Naive thymus-derived CD4-positive, alpha-beta T cell (primary cell): ENCODE measurements at regions of chr15 and their contacts with region 1.

Region 1: GRCh38 chr15:85296615-85297402 is 83.6 kb upstream of the AKAP13 start:
- DNase-seq: peak; percentile 19 to 79 (median 71)
- ATAC-seq: peak; percentile 98
- H3K4me3 ChIP-seq: peak overlapping the region; percentile 20
- H3K4me3 Mint-ChIP-seq: peak overlapping the region; percentile 5 to 78 (median 60)
- H3K27ac ChIP-seq: no peak overlapping the region
- H3K27ac Mint-ChIP-seq: peak overlapping the region in 2 of 9 donors; percentile 12 to 62
- H3K4me1 ChIP-seq: no peaks in the 10 kb centered on the region
- H3K4me1 Mint-ChIP-seq: peaks cover 7 to 22% (median 14%) of the 10 kb centered on the region in 7 donors
- H3K27me3 ChIP-seq: no peaks in the 10 kb centered on the region
- H3K27me3 Mint-ChIP-seq: peaks cover 0 to 1% (median 0%) of the 10 kb centered on the region in 5 donors

Region 2: GRCh38 chr15:85306946-85307708 is 10.3 kb after region 1 on chr15:
- CTCF ChIA-PET with region 1: no interaction called
- POLR2A ChIA-PET with region 1: no interaction called
- intact Hi-C with region 1: no loop called
- DNase-seq: no peak
- ATAC-seq: no peak
- H3K4me3 ChIP-seq: no peak overlapping the region
- H3K4me3 Mint-ChIP-seq: no peak overlapping the region
- H3K27ac ChIP-seq: no peak overlapping the region
- H3K27ac Mint-ChIP-seq: peak overlapping the region in 1 of 9 donors; percentile 26
- H3K4me1 ChIP-seq: peaks cover 0 to 4% of the 10 kb centered on the region in 2 donors
- H3K4me1 Mint-ChIP-seq: peaks cover 6 to 17% (median 8%) of the 10 kb centered on the region in 7 donors
- H3K27me3 ChIP-seq: no peaks in the 10 kb centered on the region
- H3K27me3 Mint-ChIP-seq: peaks cover 0 to 2% (median 0%) of the 10 kb centered on the region in 5 donors

Region 3: GRCh38 chr15:85318048-85318731 is 21.4 kb after region 1 on chr15:
- CTCF ChIA-PET with region 1: interaction called, 6 read pairs
- POLR2A ChIA-PET with region 1: interaction called, 3 read pairs
- intact Hi-C with region 1: loop called (anchors 2 kb)
- DNase-seq: peak in 1 of 9 donors; percentile 29
- ATAC-seq: peak; percentile 61
- H3K4me3 ChIP-seq: no peak overlapping the region
- H3K4me3 Mint-ChIP-seq: peak overlapping the region in 2 of 10 donors; percentile 16 to 74
- H3K27ac ChIP-seq: no peak overlapping the region
- H3K27ac Mint-ChIP-seq: peak overlapping the region in 4 of 9 donors; percentile 22 to 90 (median 27)
- H3K4me1 ChIP-seq: peaks cover 28 to 29% of the 10 kb centered on the region in 2 donors
- H3K4me1 Mint-ChIP-seq: peaks cover 22 to 53% (median 35%) of the 10 kb centered on the region in 7 donors
- H3K27me3 ChIP-seq: no peaks in the 10 kb centered on the region
- H3K27me3 Mint-ChIP-seq: no peaks in the 10 kb centered on the region

Region 4: DNA sequence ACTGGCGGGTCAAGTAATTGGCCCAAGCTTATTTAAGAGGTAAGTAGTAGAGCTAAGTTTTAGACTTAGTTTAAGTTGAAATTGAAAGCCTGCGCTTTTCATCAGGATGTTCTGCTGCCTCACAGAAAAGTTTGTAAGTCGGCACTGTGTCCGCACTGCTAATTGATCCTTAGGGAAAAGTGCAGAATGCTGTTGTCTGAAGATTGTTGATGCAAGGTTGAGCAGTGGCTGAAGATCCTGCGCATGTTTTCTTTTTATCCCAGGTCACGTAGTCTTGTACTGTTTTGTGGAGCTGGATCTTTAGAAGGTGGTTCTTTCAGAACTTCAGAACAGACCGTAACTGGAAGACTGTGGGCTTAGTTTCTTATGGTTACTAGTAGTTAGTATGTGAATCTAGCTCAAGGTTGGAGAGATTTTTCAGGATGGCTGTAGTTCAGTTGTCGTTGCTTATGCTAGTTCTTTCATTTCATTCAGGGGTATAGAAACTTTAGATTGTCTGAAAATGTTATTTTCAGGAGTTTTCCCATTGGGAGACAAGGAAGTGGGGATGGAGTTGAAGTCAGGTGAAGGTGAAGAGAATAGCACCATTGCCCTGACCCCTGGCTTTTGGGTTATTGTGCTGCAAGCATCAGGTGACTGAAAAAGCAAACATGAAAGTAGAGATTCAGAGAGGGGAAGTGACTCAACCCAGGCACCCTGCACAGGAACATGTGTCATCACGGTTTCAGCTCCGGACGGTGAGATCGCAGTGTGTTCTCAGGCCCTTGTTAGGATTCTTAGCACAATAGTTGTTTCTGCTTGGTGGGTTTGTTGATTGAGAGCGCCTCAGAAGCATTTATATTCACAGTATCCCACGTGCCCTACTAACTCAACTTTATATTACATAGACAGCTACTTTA is 116.4 kb after region 1 on chr15:
- CTCF ChIA-PET with region 1: interaction called, 60 read pairs
- POLR2A ChIA-PET with region 1: interaction called, 5 read pairs
- intact Hi-C with region 1: loop called (anchors 1 kb)
- DNase-seq: peak; percentile 21 to 68 (median 43)
- ATAC-seq: peak; percentile 96
- H3K4me3 ChIP-seq: no peak overlapping the region
- H3K4me3 Mint-ChIP-seq: peak overlapping the region; percentile 18 to 81 (median 72)
- H3K27ac ChIP-seq: peak overlapping the region; percentile 47
- H3K27ac Mint-ChIP-seq: peak overlapping the region; percentile 71 to 91 (median 87)
- H3K4me1 ChIP-seq: peaks cover 26 to 29% of the 10 kb centered on the region in 2 donors
- H3K4me1 Mint-ChIP-seq: peaks cover 29 to 76% (median 63%) of the 10 kb centered on the region in 7 donors
- H3K27me3 ChIP-seq: no peaks in the 10 kb centered on the region
- H3K27me3 Mint-ChIP-seq: no peaks in the 10 kb centered on the region

Region 5: DNA sequence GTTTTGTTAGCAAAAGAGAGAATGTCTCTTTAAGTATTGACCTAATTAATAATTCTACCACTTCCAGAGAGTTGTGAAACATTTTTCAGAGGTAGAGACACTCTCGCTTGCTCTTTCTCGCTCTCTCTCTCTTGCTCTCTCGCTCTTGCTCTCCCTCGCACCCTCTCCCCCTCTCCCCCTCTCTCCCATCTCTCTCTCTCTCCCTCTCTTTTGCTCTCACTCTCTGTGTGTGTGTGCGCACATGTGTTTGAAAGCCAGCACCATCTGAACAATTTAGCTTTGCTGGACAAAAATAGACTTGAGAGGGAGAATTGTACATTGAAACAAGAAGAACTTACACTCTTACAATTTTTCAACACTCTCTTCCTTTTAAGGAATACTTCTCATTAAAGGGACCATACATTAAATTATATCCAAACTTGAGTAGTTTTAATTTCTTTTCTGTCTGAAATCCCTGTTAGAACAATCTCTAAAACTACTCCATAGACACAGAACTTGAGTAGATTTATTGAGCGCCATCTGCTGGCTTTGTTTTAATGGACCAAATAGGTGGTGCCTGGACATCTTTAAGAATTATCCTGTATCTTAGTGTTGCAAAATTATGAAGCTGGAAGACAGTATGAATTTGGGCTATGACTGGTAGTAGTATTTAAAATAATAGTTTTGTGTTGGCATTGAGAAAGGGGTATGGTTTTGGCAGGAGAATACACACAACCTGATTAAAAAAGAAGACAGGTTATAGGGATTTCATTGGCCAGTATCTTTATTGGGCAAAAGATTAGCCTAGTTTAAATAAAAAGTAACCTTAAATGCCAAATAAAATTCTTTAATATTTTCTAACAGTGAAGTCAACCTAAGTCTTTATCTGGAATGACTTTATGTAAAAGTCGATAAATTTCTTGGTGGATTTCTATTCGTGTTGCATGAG is 208.2 kb after region 1 on chr15:
- CTCF ChIA-PET with region 1: interaction called, 25 read pairs
- POLR2A ChIA-PET with region 1: interaction called, 4 read pairs
- intact Hi-C with region 1: loop called (anchors 1 kb)
- DNase-seq: peak in 7 of 9 donors; percentile 7 to 51 (median 37)
- ATAC-seq: peak; percentile 66
- H3K4me3 ChIP-seq: no peak overlapping the region
- H3K4me3 Mint-ChIP-seq: peak overlapping the region in 1 of 10 donors; percentile 20
- H3K27ac ChIP-seq: no peak overlapping the region
- H3K27ac Mint-ChIP-seq: peak overlapping the region in 3 of 9 donors; percentile 13 to 30 (median 22)
- H3K4me1 ChIP-seq: peaks cover 11 to 13% of the 10 kb centered on the region in 2 donors
- H3K4me1 Mint-ChIP-seq: peaks cover 26 to 90% (median 71%) of the 10 kb centered on the region in 7 donors
- H3K27me3 ChIP-seq: no peaks in the 10 kb centered on the region
- H3K27me3 Mint-ChIP-seq: no peaks in the 10 kb centered on the region

Region 6: DNA sequence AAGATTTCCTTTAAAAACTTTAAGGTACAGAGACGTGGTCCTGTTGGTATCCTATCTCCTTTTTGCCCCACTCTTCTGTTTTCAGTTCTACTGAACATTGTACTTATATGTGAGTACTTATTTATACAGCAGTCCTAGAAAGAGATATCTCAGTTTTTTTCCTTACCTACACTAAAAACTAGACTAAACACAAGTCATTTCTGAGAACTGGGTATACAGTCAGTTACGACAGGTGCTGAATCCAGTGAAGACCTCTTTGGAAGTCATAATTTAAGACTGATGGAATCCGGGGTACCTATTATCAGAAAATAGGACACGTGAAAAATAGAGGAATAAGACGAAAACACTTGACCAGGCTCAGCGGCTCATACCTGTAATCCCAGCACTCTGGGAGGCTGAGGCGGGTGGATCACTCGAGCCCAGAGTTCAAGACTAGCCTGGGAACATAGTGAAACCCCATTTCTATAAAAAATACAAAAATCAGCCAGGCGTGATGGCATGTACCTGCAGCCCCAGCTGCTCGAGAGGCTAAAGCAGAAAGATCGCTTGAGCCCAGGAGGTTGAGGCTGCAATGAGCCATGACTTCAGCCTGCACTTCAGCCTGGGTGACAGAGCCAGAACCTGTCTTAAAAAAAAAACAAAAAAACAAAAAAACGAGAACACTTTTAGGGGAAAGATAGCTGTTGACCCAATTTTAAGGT is 421.6 kb after region 1 on chr15:
- CTCF ChIA-PET with region 1: no interaction called
- POLR2A ChIA-PET with region 1: no interaction called
- intact Hi-C with region 1: no loop called
- DNase-seq: no peak
- ATAC-seq: no peak
- H3K4me3 ChIP-seq: no peak overlapping the region
- H3K4me3 Mint-ChIP-seq: no peak overlapping the region
- H3K27ac ChIP-seq: no peak overlapping the region
- H3K27ac Mint-ChIP-seq: peak overlapping the region in 7 of 9 donors; percentile 53 to 93 (median 73)
- H3K4me1 ChIP-seq: peaks cover 0 to 2% of the 10 kb centered on the region in 2 donors
- H3K4me1 Mint-ChIP-seq: peaks cover 18 to 60% (median 45%) of the 10 kb centered on the region in 7 donors
- H3K27me3 ChIP-seq: no peaks in the 10 kb centered on the region
- H3K27me3 Mint-ChIP-seq: no peaks in the 10 kb centered on the region

Region 7: GRCh38 chr15:85831415-85832113 is 534.8 kb after region 1 on chr15:
- CTCF ChIA-PET with region 1: no interaction called
- POLR2A ChIA-PET with region 1: no interaction called
- intact Hi-C with region 1: loop called in 1 of 2 experiments (anchors 10 kb)
- DNase-seq: peak in 5 of 9 donors; percentile 6 to 21 (median 12)
- ATAC-seq: peak; percentile 44
- H3K4me3 ChIP-seq: no peak overlapping the region
- H3K4me3 Mint-ChIP-seq: no peak overlapping the region
- H3K27ac ChIP-seq: no peak overlapping the region
- H3K27ac Mint-ChIP-seq: no peak overlapping the region
- H3K4me1 ChIP-seq: no peaks in the 10 kb centered on the region
- H3K4me1 Mint-ChIP-seq: no peaks in the 10 kb centered on the region
- H3K27me3 ChIP-seq: no peaks in the 10 kb centered on the region
- H3K27me3 Mint-ChIP-seq: peaks cover 0 to 9% (median 0%) of the 10 kb centered on the region in 5 donors